ENCODE measurements at regions of chr9 and their contacts with region 1.

Region 1: DNA sequence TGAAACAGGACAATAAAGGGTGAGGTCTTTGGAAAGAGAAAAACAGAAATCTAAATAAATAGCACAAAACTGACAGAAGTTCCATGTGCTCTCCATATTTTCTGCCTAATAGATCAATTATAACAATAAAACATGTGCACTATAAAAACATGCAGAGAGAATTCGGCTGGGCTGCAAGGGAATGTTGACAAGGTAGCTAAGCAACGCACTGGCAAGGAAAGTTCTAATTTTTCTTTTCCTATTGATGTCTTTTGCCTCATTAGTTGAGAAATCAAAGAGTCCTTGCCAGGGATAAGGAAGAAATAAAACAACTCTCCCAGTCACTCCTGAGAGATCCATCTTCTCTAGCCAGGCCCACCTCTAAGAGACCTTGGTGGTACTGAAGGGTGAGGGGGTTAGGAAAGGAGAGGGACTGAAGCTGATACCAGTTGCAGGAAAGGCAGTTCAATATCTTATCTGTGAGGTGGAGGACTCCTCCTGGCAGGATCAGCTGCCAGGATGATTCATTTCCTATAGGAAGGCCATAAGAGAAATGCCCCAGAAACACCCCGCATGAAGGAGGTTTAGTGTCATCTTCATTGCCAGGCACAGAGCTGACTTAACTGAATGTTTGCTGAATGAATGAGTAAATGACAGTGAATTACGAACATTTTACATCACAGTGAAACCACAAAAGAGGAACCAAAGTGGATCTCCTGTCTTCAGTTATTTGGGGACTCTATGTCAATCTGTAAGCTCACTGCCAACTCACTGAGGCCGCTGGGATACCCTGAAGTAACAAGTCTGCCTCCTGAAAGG is 63.7 kb upstream of the IFNK start:
- DNase-seq: peak; percentile 80 to 95 (median 91)
- H3K4me3 ChIP-seq: no peak overlapping the region
- H3K4me3 Mint-ChIP-seq: peak overlapping the region in 1 of 2 donors; percentile 6
- H3K27ac ChIP-seq: peak overlapping the region in 1 of 2 donors; percentile 38
- H3K27ac Mint-ChIP-seq: peak overlapping the region; percentile 78 to 93 (median 89)
- H3K4me1 ChIP-seq: peaks cover 19 to 22% of the 10 kb centered on the region in 2 donors
- H3K4me1 Mint-ChIP-seq: peaks cover 24% of the 10 kb centered on the region
- H3K27me3 ChIP-seq: no peaks in the 10 kb centered on the region
- H3K27me3 Mint-ChIP-seq: peaks cover 0 to 2% (median 2%) of the 10 kb centered on the region in 3 donors
- CTCF ChIP-seq: no peak

Region 2: DNA sequence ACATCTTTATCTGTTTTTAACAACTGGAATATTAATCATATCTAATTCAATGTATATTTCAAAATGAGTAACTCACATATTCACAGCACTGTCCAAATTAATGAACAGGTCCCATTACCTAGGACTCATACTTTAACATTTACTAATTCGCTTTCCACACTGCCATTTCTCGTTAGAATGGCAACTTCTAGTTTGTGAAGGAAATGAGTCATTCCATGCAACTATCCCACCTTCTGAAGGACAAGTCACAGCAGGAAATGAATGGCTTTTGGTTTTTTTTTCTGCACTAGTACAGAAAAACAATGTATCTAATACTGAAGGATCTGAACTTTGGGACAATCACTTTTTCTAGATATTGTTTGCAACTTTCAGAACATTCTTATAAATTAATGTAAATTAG is 39.1 kb after region 1 on chr9:
- intact Hi-C with region 1: loop called in 1 of 2 experiments (anchors 5 kb)
- DNase-seq: peak; percentile 38 to 78 (median 69)
- H3K4me3 ChIP-seq: peak overlapping the region in 1 of 3 experiments; percentile 13
- H3K4me3 Mint-ChIP-seq: no peak overlapping the region
- H3K27ac ChIP-seq: peak overlapping the region in 1 of 2 donors; percentile 24
- H3K27ac Mint-ChIP-seq: peak overlapping the region in 1 of 7 donors; percentile 37
- H3K4me1 ChIP-seq: peaks cover 10 to 30% of the 10 kb centered on the region in 2 donors
- H3K4me1 Mint-ChIP-seq: peaks cover 40% of the 10 kb centered on the region
- H3K27me3 ChIP-seq: no peaks in the 10 kb centered on the region
- H3K27me3 Mint-ChIP-seq: no peaks in the 10 kb centered on the region
- CTCF ChIP-seq: no peak

Region 3: GRCh38 chr9:28792736-28793135 is 1332.3 kb after region 1 on chr9:
- intact Hi-C with region 1: no loop called
- DNase-seq: no peak
- H3K4me3 ChIP-seq: no peak overlapping the region
- H3K4me3 Mint-ChIP-seq: no peak overlapping the region
- H3K27ac ChIP-seq: no peak overlapping the region
- H3K27ac Mint-ChIP-seq: no peak overlapping the region
- H3K4me1 ChIP-seq: no peaks in the 10 kb centered on the region
- H3K4me1 Mint-ChIP-seq: no peaks in the 10 kb centered on the region
- H3K27me3 ChIP-seq: no peaks in the 10 kb centered on the region
- H3K27me3 Mint-ChIP-seq: no peaks in the 10 kb centered on the region
- CTCF ChIP-seq: no peak